Activated naive CD4-positive, alpha-beta T cell treated with anti-CD3 and anti-CD28 coated beads for 36 hours (primary cell): ENCODE measurements at regions of chr13 and their contacts with region 1.

Region 1: GRCh38 chr13:26310003-26310402 is 56.1 kb downstream of the CDK8 start:
- DNase-seq: no peak
- H3K4me3 Mint-ChIP-seq: no peak overlapping the region
- H3K27ac Mint-ChIP-seq: no peak overlapping the region
- H3K4me1 Mint-ChIP-seq: peaks cover 39% of the 10 kb centered on the region
- H3K27me3 Mint-ChIP-seq: no peaks in the 10 kb centered on the region

Region 2: GRCh38 chr13:26320766-26321165 is 10.8 kb after region 1 on chr13:
- CTCF ChIA-PET with region 1: no interaction called
- intact Hi-C with region 1: loop called (anchors 1 kb)
- DNase-seq: no peak
- H3K4me3 Mint-ChIP-seq: no peak overlapping the region
- H3K27ac Mint-ChIP-seq: no peak overlapping the region
- H3K4me1 Mint-ChIP-seq: peaks cover 47% of the 10 kb centered on the region
- H3K27me3 Mint-ChIP-seq: no peaks in the 10 kb centered on the region